ENCODE measurements at regions of chr5 and their contacts with region 1.

Region 1: DNA sequence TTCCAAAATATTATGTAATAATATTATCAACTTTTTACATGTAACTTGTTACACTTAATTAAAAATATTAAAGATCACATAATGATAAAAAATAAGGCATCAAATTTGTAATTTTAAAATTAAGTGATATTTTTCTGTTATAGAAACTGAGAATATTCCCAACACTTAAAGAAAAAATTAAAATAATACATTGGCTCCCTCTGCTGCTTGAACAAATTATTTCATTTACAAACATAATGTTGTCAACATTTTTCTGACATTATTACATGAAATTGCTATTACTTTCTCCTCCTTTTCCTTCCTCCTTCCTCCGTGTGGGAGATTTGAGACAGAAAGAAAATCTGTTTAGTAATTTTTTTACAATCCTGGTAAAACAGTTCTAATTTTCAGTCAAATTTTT is 42.3 kb downstream of the RNF180 start:
- ATAC-seq: no peak
- H3K4me3 ChIP-seq: no peak overlapping the region
- H3K27ac ChIP-seq: no peak overlapping the region
- H3K4me1 ChIP-seq: no peaks in the 10 kb centered on the region

Region 2: GRCh38 chr5:64074533-64074932 is 133.4 kb before region 1 on chr5:
- in situ Hi-C with region 1: loop called in 2 of 9 experiments (anchors 25 kb)
- ATAC-seq: peak in 4 of 8 experiments; percentile 35 to 81 (median 63)
- H3K4me3 ChIP-seq: no peak overlapping the region
- H3K27ac ChIP-seq: no peak overlapping the region
- H3K4me1 ChIP-seq: no peaks in the 10 kb centered on the region

Region 3: DNA sequence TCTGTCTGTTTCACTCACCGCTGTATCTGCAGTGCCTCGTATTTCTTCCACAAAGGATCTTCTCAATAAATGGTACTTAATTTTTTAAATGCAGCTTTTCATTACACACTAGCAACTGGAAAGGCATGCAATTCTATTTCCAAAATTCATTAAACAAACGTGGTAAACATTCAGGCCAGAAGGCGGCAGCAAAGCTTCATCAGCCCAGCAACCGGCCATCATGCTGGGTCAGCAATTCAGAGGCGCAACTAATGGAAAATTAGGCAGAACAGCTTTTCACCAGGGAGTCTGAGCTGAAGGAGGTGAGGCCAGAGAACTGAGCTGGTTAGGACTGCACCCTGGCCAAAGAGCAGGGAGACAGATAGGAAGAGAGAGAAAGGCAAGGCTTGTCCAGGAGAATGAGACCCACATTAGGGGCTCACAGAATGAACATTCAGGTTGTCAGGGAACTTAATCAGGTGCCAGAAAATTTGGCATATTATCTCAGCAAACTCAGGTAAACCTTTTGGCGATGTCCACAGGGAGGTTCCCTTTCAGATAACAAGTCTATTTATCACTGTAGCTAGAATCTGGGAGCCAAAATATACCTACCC is 60.0 kb before region 1 on chr5:
- in situ Hi-C with region 1: loop called in 1 of 9 experiments (anchors 10 kb)
- ATAC-seq: peak in 7 of 8 experiments; percentile 2 to 59 (median 43)
- H3K4me3 ChIP-seq: no peak overlapping the region
- H3K27ac ChIP-seq: no peak overlapping the region
- H3K4me1 ChIP-seq: no peaks in the 10 kb centered on the region

Measured in motor neuron (in vitro differentiated cells).